Spleen (tissue), 13 donors: ENCODE measurements at regions of chr11 and their contacts with region 1.

Region 1: GRCh38 chr11:64304316-64305072 is 830 bp upstream of the ESRRA start:
- DNase-seq: peak; percentile 98
- H3K4me3 ChIP-seq: peak overlapping the region; percentile 28 to 91 (median 78)
- H3K27ac ChIP-seq: peak overlapping the region; percentile 71 to 98 (median 94)
- H3K4me1 ChIP-seq: peaks cover 37 to 72% (median 42%) of the 10 kb centered on the region in 6 donors
- H3K27me3 ChIP-seq: peaks cover 3 to 31% (median 19%) of the 10 kb centered on the region in 7 donors
- CTCF ChIP-seq: peak; percentile 80 to 96 (median 92)
- POLR2A ChIP-seq: peak in 1 of 3 donors; percentile 22

Region 2: GRCh38 chr11:64110465-64111375 is 193.8 kb before region 1 on chr11:
- intact Hi-C with region 1: no loop called
- DNase-seq: no peak
- H3K4me3 ChIP-seq: no peak overlapping the region
- H3K27ac ChIP-seq: no peak overlapping the region
- H3K4me1 ChIP-seq: no peaks in the 10 kb centered on the region
- H3K27me3 ChIP-seq: no peaks in the 10 kb centered on the region
- CTCF ChIP-seq: no peak
- POLR2A ChIP-seq: no peak

Region 3: DNA sequence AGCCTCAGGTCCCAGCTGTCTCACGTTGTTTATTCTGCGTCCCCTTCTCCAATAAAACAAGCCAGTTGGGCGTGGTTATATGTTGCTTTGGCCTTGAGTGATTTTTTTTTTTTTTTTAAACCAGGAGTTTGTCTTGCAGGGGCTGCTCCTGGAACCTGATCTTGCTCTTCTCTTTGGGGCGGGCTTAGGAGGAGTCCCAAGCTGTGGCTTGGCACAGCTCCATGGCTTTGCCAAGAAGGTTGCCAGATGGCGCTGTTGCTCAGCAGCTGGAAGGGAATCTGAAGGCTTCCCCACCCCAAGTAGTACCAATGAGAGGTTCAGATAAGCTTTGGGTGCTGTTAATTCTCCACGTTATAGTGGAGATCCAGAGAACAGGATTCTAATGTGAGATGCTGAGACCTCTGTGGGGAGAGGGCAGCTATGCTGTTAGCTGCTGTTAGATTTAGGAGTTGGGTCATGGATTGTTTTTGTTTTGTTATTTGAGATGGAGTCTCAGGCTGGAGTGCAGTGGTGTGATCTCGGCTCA is 100.0 kb before region 1 on chr11:
- intact Hi-C with region 1: loop called (anchors 5 kb)
- DNase-seq: peak; percentile 95
- H3K4me3 ChIP-seq: peak overlapping the region in 1 of 8 donors; percentile 89
- H3K27ac ChIP-seq: peak overlapping the region in 7 of 8 donors; percentile 93 to 99 (median 96)
- H3K4me1 ChIP-seq: peaks cover 32 to 60% (median 51%) of the 10 kb centered on the region in 6 donors
- H3K27me3 ChIP-seq: no peaks in the 10 kb centered on the region
- CTCF ChIP-seq: peak; percentile 65 to 91 (median 82)
- POLR2A ChIP-seq: no peak

Region 4: DNA sequence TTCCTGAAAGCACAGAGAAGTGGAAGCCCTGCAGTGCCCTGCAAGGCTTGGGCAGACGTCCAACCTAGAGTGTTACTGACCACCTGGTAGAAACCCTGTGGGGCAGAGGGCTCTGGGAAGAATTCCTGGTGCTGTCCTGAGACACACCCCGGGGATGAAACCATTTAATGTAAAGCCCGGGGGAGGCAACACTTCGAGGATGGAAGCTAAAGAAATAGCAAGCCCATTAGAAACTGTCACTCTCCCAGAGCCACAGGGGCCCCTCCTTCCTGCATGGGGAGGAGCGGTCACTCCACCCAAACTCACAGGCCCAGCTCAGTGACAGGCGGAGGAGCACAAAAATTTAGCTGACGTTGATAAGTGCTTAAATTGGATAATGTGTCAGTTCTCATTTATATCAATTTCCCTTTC is 360.9 kb after region 1 on chr11:
- intact Hi-C with region 1: no loop called
- DNase-seq: no peak
- H3K4me3 ChIP-seq: no peak overlapping the region
- H3K27ac ChIP-seq: peak overlapping the region in 4 of 8 donors; percentile 23 to 40 (median 29)
- H3K4me1 ChIP-seq: peaks cover 0 to 16% (median 6%) of the 10 kb centered on the region in 6 donors
- H3K27me3 ChIP-seq: peaks cover 0 to 27% (median 0%) of the 10 kb centered on the region in 7 donors
- CTCF ChIP-seq: no peak
- POLR2A ChIP-seq: no peak